ENCODE measurements at regions of chr20 and their contacts with region 1.

Region 1: GRCh38 chr20:22339091-22339881 is 245.1 kb downstream of the FOXA2 start:
- DNase-seq: peak in 1 of 5 donors; percentile 31
- ATAC-seq: peak in 3 of 4 donors; percentile 34 to 59 (median 55)
- H3K4me3 ChIP-seq: no peak overlapping the region
- H3K27ac ChIP-seq: no peak overlapping the region
- H3K4me1 ChIP-seq: no peaks in the 10 kb centered on the region
- H3K27me3 ChIP-seq: peaks cover 0 to 57% (median 7%) of the 10 kb centered on the region in 9 donors
- CTCF ChIP-seq: peak; percentile 49 to 85 (median 73)
- POLR2A ChIP-seq: no peak

Region 2: DNA sequence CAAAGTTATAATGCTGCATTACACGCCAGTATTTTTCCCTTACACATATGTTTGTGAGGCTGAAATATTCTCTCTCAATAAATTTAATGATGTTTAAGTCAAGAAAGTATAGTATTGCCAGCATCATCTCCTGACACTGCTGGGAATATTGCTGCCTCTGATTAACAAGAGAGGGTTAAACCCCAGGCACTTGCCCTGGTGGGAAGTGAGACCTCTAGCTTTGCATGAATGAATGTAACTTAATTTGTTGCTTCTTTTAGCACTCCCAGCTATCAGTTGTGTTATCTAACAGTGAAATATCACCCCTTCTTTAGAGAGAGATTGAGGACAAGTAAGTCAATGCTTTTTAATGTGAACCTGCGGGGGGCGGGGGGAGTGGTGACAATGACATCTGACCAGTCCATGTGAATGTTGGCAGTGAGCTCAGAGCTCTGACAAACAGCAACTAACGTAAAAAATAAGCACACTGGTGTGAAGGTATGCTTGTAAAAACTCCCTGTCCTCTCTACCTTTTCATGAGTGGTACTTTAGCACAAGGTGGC is 235.3 kb after region 1 on chr20:
- intact Hi-C with region 1: no loop called
- DNase-seq: no peak
- ATAC-seq: no peak
- H3K4me3 ChIP-seq: no peak overlapping the region
- H3K27ac ChIP-seq: no peak overlapping the region
- H3K4me1 ChIP-seq: peaks cover 0 to 22% (median 1%) of the 10 kb centered on the region in 12 donors
- H3K27me3 ChIP-seq: peaks cover 56 to 99% (median 93%) of the 10 kb centered on the region in 9 donors
- CTCF ChIP-seq: no peak
- POLR2A ChIP-seq: no peak

Region 3: DNA sequence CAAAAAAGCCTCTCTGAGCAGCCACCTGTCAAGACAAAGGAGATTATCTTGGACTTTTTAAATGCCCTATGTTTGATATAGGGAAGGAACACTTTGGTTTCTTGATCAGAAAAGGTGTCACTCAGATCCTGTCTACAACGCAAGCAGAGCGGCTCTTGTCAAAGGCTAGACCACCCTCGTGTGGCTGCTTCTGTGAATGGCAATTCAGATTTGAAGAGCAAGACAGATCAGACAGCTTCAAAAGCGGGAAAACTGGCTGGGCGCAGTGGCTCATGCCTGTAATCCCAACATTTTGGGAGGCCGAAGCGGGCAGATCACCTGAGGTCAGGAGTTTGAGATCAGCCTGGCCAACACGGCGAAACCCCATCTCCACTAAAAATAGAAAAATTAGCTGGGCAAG is 1001.2 kb after region 1 on chr20:
- intact Hi-C with region 1: loop called in 8 of 10 experiments (anchors 5 to 10 kb)
- DNase-seq: peak; percentile 60 to 74 (median 72)
- ATAC-seq: peak in 3 of 4 donors; percentile 84 to 89 (median 87)
- H3K4me3 ChIP-seq: no peak overlapping the region
- H3K27ac ChIP-seq: no peak overlapping the region
- H3K4me1 ChIP-seq: peaks cover 0 to 5% (median 1%) of the 10 kb centered on the region in 12 donors
- H3K27me3 ChIP-seq: no peaks in the 10 kb centered on the region
- CTCF ChIP-seq: peak; percentile 52 to 86 (median 77)
- POLR2A ChIP-seq: no peak